HEK293 (cell line): ENCODE measurements at regions of chr1 and their contacts with region 1.

Region 1: DNA sequence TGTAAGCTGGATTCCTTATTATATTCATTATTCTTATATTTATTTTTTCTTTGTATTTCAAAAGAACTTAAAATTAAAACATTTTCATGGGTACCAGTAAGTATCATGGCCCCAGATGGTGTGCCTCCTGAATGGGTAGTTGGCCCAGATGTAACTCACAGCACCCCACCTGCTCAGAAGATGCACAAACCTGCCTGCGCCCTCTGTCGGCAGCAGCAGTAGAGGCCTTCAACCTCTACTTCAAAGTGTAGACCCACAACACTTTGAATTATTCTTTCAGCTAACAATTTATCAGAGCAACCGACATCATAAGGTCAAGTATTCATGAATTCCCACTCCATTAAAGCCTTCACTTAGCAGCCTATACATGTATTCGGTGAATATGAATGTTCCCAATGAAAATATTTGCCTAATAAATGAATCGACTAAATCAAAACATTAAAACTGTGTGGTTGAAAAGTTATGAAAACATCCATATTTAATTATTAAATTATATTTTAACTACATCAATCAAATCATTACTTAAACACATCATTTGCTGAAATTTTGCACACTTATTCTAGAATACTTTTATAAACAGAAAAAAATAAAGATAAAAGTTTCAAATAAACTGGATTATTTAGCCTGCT is 25.4 kb downstream of the PIGM start:
- H3K4me3 ChIP-seq: no peak overlapping the region
- H3K27ac ChIP-seq: no peak overlapping the region
- H3K4me1 ChIP-seq: no peaks in the 10 kb centered on the region
- CTCF ChIP-seq: peak; percentile 73

Region 2: GRCh38 chr1:159214149-159214760 is 792.2 kb before region 1 on chr1:
- CTCF ChIA-PET with region 1: interaction called, 14 read pairs
- POLR2A ChIA-PET with region 1: no interaction called
- H3K4me3 ChIP-seq: no peak overlapping the region
- H3K27ac ChIP-seq: no peak overlapping the region
- H3K4me1 ChIP-seq: no peaks in the 10 kb centered on the region
- CTCF ChIP-seq: no peak

Region 3: GRCh38 chr1:159839116-159839849 is 167.1 kb before region 1 on chr1:
- CTCF ChIA-PET with region 1: interaction called, 11 read pairs
- POLR2A ChIA-PET with region 1: no interaction called
- H3K4me3 ChIP-seq: no peak overlapping the region
- H3K27ac ChIP-seq: no peak overlapping the region
- H3K4me1 ChIP-seq: no peaks in the 10 kb centered on the region
- CTCF ChIP-seq: no peak

Region 4: GRCh38 chr1:159924981-159925712 is 81.3 kb before region 1 on chr1 and contains the start of gene TAGLN2:
- CTCF ChIA-PET with region 1: interaction called, 353 read pairs
- POLR2A ChIA-PET with region 1: interaction called, 4 read pairs
- H3K4me3 ChIP-seq: peak within 1 kb of the TSS; percentile 64
- H3K27ac ChIP-seq: peak within 1 kb of the TSS; percentile 95
- H3K4me1 ChIP-seq: peaks cover 13% of the 10 kb centered on the region
- CTCF ChIP-seq: peak; percentile 4; the same call in 1 of the 2 replicates

Region 5: DNA sequence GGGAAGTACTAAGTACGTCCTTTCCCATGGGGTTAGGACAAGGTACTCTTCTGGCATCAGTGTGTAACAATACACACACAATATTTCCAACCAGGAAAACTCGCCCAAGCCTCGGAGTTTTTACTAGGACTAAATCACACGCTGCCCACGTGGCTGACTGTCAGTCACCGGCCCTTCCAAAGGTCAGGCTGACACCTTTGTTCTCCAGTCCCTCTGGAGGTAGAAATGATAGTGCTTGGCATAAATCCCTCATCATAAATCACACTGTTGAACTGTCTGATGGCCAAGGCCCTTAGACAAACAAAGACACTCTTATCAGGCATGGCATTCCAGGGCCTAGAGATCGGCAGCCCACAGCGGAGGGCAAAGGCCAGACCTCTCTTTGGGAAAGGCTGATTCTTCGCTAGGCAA is 35.5 kb before region 1 on chr1:
- CTCF ChIA-PET with region 1: interaction called, 22 read pairs
- POLR2A ChIA-PET with region 1: no interaction called
- H3K4me3 ChIP-seq: no peak overlapping the region
- H3K27ac ChIP-seq: no peak overlapping the region
- H3K4me1 ChIP-seq: no peaks in the 10 kb centered on the region
- CTCF ChIP-seq: no peak

Region 6: DNA sequence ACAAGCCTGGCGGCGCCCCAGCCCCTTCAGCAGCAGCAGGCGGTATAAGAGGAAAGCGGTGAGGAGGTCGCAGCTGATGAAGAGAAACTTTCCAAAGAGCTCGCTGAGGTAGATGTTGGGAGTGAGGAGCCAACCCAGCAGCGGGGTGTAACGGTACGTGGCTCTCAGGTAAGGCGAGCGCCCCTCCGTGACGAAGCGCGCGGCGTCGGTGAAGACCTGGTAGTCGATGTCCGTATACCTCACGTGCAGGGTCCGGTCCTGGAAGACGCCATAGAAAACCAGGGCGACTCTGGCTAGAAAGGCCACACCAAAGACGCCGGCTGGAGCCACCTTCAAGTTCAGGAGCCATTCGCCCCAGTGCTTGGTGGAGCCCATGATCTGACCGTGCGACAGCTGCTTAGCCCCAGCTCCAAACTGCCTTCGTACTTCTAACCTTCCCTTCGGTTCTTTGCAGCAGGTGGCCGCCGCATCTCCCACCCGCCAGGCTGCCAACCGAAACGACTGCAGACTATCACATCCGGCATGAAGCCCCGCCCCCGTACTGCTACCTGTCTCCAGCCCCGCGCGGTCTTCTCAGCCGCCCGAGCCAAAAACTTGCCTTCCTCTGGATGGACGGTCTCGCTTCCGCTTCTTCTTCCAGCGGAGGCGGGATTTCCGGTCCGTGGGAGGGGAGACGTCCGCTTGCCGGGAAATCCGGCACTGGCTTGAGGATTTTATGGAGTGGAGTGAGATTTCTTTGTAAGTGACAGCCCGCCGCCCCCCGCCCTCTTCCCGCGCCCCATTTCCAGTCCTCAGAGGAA is 25.1 kb after region 1 on chr1 and contains the start of gene PIGM:
- CTCF ChIA-PET with region 1: interaction called, 31 read pairs
- POLR2A ChIA-PET with region 1: no interaction called
- H3K4me3 ChIP-seq: peak within 1 kb of the TSS; percentile 82
- H3K27ac ChIP-seq: peak within 1 kb of the TSS; percentile 72
- H3K4me1 ChIP-seq: peaks cover 17% of the 10 kb centered on the region; the same call in 1 of the 2 replicates
- CTCF ChIP-seq: 0 out of 2 replicates have a peak, but pooled peaks have one; percentile 23